SK-N-SH (cell line): ENCODE measurements at regions of chr1 and their contacts with region 1.

Region 1: DNA sequence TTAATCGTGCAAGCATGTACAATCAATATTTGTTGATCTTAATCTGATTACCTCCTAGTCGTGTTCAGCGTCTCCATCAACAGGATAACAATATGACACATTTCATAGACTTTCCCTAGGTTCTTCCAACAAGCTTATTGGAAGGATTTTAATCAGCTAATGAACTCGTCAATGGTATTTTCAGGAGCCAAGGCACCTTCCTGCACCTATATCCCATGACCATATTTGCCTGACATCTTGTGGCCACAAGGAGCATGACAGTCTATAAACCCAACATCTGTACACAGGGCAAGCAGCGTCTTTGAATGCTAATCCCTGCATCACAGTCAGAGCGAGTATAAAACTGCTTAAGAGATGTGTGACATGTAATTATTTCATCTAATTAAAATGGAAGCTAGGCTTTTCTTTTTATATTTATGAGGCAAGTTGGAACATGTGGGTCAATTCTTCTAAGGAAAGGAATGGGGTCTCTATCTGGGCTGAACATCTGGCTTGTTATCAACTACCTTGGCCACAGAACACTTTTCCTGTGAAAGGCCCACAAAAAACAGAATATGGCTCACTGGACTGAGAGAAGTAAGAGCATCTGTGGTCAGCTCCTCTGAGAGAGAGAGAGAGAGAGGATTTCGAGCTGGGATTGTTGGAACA is 388.8 kb downstream of the NTNG1 start:
- DNase-seq: peak; percentile 67
- H3K4me3 ChIP-seq: no peak overlapping the region
- H3K27ac ChIP-seq: no peak overlapping the region
- H3K4me1 ChIP-seq: peaks cover 0 to 7% of the 10 kb centered on the region in 2 experiments; a peak in 1 of 4 replicates
- H3K27me3 ChIP-seq: no peaks in the 10 kb centered on the region
- CTCF ChIP-seq: peak; percentile 73
- EP300 ChIP-seq: no peak
- RAD21 ChIP-seq: peak; percentile 93

Region 2: GRCh38 chr1:107277022-107277421 is 252.6 kb before region 1 on chr1:
- CTCF ChIA-PET with region 1: interaction called, 23 read pairs
- POLR2A ChIA-PET with region 1: no interaction called
- DNase-seq: peak; percentile 23
- H3K4me3 ChIP-seq: no peak overlapping the region
- H3K27ac ChIP-seq: no peak overlapping the region
- H3K4me1 ChIP-seq: no peaks in the 10 kb centered on the region; a peak in 2 of 4 replicates
- H3K27me3 ChIP-seq: no peaks in the 10 kb centered on the region
- CTCF ChIP-seq: peak; percentile 54
- EP300 ChIP-seq: no peak
- RAD21 ChIP-seq: peak; percentile 67

Region 3: DNA sequence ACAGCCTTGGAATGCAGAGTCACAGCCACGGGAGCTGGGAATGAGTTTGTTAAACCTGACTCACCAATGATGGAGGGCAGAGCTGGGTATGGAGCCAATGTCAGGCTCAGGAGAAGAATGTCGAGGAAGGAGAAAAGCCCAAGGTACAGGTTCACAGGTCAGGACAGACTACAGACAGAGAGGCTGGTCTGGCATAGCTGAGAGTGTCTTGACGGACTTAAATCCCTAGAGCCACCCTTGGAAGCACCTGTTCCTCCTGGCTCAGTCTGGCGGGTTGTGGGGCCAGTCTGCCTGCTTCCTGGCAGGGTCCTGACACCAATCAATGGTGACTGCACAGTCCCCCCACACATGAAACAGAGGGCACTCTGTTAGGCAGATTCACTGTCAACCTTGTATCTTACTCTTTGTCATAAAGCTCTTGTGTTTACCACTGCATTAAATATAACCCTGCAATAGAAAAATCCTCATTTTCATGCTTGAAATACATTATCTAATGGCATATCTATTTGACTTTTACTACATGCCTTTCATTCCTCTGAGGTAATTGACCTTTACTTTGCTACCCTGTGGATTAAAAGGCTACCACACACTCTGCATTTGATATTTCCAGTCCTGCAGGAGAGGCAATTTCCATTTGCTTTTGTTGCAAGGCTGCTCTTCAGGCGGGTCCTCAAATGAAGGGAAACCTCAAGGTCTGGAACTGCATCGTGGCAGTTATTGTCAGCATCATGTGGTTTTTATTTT is 150.9 kb before region 1 on chr1:
- CTCF ChIA-PET with region 1: no interaction called
- POLR2A ChIA-PET with region 1: no interaction called
- DNase-seq: no peak
- H3K4me3 ChIP-seq: no peak overlapping the region
- H3K27ac ChIP-seq: no peak overlapping the region
- H3K4me1 ChIP-seq: no peaks in the 10 kb centered on the region
- H3K27me3 ChIP-seq: no peaks in the 10 kb centered on the region; the same call in 1 of the 2 replicates
- CTCF ChIP-seq: no peak
- EP300 ChIP-seq: no peak
- RAD21 ChIP-seq: no peak

Region 4: GRCh38 chr1:107477233-107477632 is 52.4 kb before region 1 on chr1:
- CTCF ChIA-PET with region 1: interaction called, 11 read pairs
- POLR2A ChIA-PET with region 1: no interaction called
- DNase-seq: no peak
- H3K4me3 ChIP-seq: no peak overlapping the region
- H3K27ac ChIP-seq: no peak overlapping the region
- H3K4me1 ChIP-seq: peaks cover 6 to 14% of the 10 kb centered on the region in 2 experiments; a peak in 2 of 4 replicates
- H3K27me3 ChIP-seq: no peaks in the 10 kb centered on the region
- CTCF ChIP-seq: peak; percentile 29; the same call in 1 of the 2 replicates
- EP300 ChIP-seq: no peak
- RAD21 ChIP-seq: no peak

Region 5: DNA sequence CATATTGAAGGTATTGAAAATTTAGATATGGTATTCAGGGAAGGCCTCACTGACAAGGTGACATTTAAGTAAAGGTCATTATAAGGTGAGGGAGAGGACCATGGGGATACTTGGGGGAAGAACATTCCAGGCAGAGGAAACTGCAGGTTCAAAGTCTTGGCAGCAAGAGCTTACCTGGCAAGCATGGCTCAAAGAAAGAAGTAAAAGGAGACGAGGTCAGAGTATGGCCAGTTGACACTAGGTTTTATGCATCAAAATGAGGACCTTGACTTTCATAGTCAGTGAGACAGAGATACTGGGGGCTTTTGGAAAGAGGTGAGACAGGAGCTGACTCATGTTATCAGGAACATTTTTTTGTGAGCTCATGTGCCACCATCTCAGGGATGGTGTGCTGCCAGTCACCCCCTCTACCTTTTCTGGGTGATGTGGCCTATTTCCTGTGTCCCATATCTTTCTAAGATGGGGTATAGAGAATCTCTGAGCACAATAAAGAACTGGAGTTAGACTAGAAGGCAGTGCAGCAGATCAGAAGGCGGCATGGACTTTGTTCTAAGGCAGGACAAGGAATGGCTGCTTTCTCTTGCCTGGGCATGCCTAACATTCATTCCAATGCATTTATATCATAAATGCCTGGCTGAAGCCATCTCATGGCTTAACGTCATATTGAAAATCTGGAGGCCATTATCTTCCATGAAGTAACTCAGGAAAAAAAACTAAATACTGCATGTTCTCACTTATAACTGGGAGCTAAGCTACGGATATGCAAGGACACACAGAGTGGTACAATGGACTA is 17.9 kb after region 1 on chr1:
- CTCF ChIA-PET with region 1: interaction called, 18 read pairs
- POLR2A ChIA-PET with region 1: no interaction called
- DNase-seq: no peak
- H3K4me3 ChIP-seq: no peak overlapping the region
- H3K27ac ChIP-seq: no peak overlapping the region
- H3K4me1 ChIP-seq: peaks cover 0 to 5% of the 10 kb centered on the region in 2 experiments; a peak in 1 of 4 replicates
- H3K27me3 ChIP-seq: no peaks in the 10 kb centered on the region
- CTCF ChIP-seq: no peak
- EP300 ChIP-seq: no peak
- RAD21 ChIP-seq: no peak

Region 6: DNA sequence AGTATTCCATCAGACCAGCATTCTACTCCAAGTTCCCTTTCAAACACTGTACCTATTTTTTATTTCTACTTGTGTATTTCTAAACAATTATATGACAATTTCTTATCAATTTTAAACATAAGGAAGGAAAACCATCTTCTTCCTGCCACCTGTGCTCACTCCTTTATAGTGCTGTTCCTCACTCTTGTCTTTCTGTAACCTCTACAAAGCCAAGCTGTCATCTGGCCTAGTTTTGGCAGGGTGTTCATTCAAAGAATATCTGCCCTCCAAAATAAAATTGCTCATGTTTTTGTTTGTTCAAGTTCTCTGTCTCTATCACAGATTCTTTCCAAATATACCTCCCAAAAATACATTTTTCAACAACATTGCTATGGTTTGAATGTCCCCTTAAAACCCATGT is 75.2 kb after region 1 on chr1:
- CTCF ChIA-PET with region 1: no interaction called
- POLR2A ChIA-PET with region 1: no interaction called
- DNase-seq: no peak
- H3K4me3 ChIP-seq: no peak overlapping the region
- H3K27ac ChIP-seq: no peak overlapping the region
- H3K4me1 ChIP-seq: no peaks in the 10 kb centered on the region
- H3K27me3 ChIP-seq: no peaks in the 10 kb centered on the region
- CTCF ChIP-seq: no peak
- EP300 ChIP-seq: no peak
- RAD21 ChIP-seq: no peak

Region 7: GRCh38 chr1:107683191-107683657 is 153.6 kb after region 1 on chr1:
- CTCF ChIA-PET with region 1: no interaction called
- POLR2A ChIA-PET with region 1: no interaction called
- DNase-seq: no peak
- H3K4me3 ChIP-seq: no peak overlapping the region
- H3K27ac ChIP-seq: no peak overlapping the region
- H3K4me1 ChIP-seq: no peaks in the 10 kb centered on the region
- H3K27me3 ChIP-seq: no peaks in the 10 kb centered on the region
- CTCF ChIP-seq: no peak
- EP300 ChIP-seq: no peak
- RAD21 ChIP-seq: no peak

Region 8: DNA sequence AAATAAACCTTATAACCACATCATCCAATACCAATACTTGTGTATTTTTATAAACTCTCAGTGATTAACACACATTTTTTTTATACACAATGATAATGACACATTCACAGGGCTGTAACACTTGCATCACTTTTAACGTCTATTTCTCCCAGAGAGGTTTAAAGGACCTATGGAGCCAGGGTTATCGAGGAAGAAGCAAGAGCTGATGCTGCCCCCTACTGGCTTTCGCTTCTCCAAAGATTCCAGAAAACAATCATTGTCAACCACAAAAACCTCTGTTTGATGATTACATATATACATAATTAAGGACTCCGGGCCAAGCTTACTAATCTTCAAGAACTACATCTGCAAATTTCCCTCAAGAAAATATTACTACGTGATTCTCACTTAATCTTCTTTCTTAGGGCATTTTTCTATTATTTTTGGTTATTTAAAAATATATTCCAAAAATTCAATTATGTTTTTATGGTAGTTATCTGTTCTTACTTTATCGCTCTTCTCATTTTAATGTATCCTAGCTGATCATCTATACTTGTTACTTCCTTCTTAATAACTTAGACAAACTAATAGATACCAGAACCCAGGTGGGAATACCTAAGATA is 220.8 kb after region 1 on chr1:
- CTCF ChIA-PET with region 1: interaction called, 36 read pairs
- POLR2A ChIA-PET with region 1: no interaction called
- DNase-seq: peak; percentile 60
- H3K4me3 ChIP-seq: no peak overlapping the region; a peak in 1 of 4 replicates
- H3K27ac ChIP-seq: no peak overlapping the region
- H3K4me1 ChIP-seq: no peaks in the 10 kb centered on the region; a peak in 1 of 4 replicates
- H3K27me3 ChIP-seq: no peaks in the 10 kb centered on the region
- CTCF ChIP-seq: peak; percentile 89
- EP300 ChIP-seq: 0 out of 4 replicates have a peak, but pooled peaks of 1 of the 2 experiments have one; percentile 8
- RAD21 ChIP-seq: peak; percentile 91

Region 9: GRCh38 chr1:107766533-107766932 is 236.9 kb after region 1 on chr1:
- CTCF ChIA-PET with region 1: no interaction called
- POLR2A ChIA-PET with region 1: no interaction called
- DNase-seq: no peak
- H3K4me3 ChIP-seq: no peak overlapping the region
- H3K27ac ChIP-seq: no peak overlapping the region
- H3K4me1 ChIP-seq: no peaks in the 10 kb centered on the region
- H3K27me3 ChIP-seq: no peaks in the 10 kb centered on the region
- CTCF ChIP-seq: no peak
- EP300 ChIP-seq: no peak
- RAD21 ChIP-seq: no peak